Activated CD4-positive, alpha-beta T cell treated with anti-CD3 and anti-CD28 coated beads for 36 hours (primary cell): ENCODE measurements at regions of chr1 and their contacts with region 1.

Region 1: DNA sequence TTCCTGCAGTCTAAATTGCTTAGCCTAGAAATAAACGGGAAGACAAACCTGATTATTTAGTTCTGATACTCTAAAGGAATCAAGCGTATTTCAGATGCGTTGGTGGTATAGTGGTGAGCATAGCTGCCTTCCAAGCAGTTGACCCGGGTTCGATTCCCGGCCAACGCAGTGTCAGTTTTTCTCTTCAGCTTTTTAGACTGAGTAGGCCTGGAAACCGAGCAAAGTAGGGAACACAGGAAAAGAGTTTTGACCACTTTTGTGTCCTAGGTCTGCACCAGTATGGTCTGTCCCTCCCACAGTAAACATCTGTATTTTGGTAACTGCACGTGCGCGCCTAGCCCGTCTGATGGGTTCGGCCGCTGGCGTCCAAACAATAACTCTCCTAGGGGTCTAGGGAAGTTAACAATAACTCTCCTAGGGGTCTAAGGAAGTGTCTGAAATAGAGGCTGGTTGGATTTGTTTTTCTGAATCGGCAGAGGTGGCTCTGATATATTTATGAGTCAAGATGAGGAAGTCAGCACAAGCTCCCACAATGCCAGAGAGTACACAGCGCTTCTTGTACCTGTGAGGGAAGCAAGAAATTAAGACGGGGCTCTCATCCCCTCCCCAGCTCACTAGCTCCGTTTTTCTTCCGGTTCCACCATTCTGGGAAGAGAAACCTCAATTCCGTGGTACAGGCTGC is 15.6 kb upstream of the HJV start:
- DNase-seq: peak; percentile 91
- ATAC-seq: peak; percentile 45
- H3K4me3 Mint-ChIP-seq: peak overlapping the region; percentile 95
- H3K27ac Mint-ChIP-seq: peak overlapping the region; percentile 98
- H3K4me1 Mint-ChIP-seq: peaks cover 36% of the 10 kb centered on the region
- H3K27me3 Mint-ChIP-seq: peaks cover 2% of the 10 kb centered on the region

Region 2: GRCh38 chr1:145927063-145927886 is 109.8 kb before region 1 on chr1 and contains the start of gene RBM8A:
- CTCF ChIA-PET with region 1: no interaction called
- POLR2A ChIA-PET with region 1: interaction called, 3 read pairs
- intact Hi-C with region 1: loop called (anchors 1 to 5 kb)
- DNase-seq: peak; percentile 96
- ATAC-seq: peak; percentile 97
- H3K4me3 Mint-ChIP-seq: no peak within 1 kb of the TSS
- H3K27ac Mint-ChIP-seq: no peak within 1 kb of the TSS
- H3K4me1 Mint-ChIP-seq: peaks cover 28% of the 10 kb centered on the region
- H3K27me3 Mint-ChIP-seq: no peaks in the 10 kb centered on the region
- total RNA-seq, gene RBM8A: 293 to 330 TPM

Region 3: DNA sequence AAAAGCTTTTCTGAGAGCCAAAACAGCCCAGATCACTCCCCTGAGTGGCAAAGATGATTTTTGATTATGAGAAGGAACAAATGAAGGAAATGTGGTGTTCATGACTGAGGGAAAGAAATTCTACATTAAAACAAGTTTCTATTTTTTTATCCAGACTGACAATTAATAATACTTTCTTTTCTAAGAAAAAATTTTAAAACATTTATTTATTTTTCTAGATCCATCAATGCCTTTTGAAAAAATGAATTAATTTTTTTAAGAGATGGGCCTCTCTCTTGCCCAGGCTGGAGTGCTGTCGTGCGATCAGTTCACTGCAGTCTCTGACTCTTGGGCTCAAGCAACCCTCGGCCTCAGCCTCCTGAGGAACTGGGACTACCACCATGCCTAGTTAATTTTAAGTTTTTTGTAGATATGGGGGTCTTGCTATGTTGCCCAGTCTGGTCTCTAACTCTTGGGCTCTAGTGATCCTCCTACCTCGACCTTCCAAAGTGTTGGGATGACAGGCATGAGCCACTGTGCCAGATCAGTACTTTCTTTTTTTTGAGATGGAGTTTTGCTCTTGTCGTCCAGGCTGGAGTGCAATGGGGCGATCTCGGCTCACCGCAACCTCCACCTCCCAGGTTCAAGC is 29.5 kb before region 1 on chr1:
- CTCF ChIA-PET with region 1: interaction called, 7 read pairs
- POLR2A ChIA-PET with region 1: interaction called, 3 read pairs
- intact Hi-C with region 1: loop called (anchors 2 kb)
- DNase-seq: no peak
- ATAC-seq: no peak
- H3K4me3 Mint-ChIP-seq: peak overlapping the region; percentile 58
- H3K27ac Mint-ChIP-seq: peak overlapping the region; percentile 76
- H3K4me1 Mint-ChIP-seq: peaks cover 38% of the 10 kb centered on the region
- H3K27me3 Mint-ChIP-seq: no peaks in the 10 kb centered on the region

Region 4: GRCh38 chr1:146012737-146013403 is 24.2 kb before region 1 on chr1:
- CTCF ChIA-PET with region 1: interaction called, 14 read pairs
- POLR2A ChIA-PET with region 1: interaction called, 9 read pairs
- intact Hi-C with region 1: loop called (anchors 1 to 2 kb)
- DNase-seq: peak; percentile 71
- ATAC-seq: peak; percentile 81
- H3K4me3 Mint-ChIP-seq: no peak overlapping the region
- H3K27ac Mint-ChIP-seq: peak overlapping the region; percentile 21
- H3K4me1 Mint-ChIP-seq: peaks cover 7% of the 10 kb centered on the region
- H3K27me3 Mint-ChIP-seq: peaks cover 5% of the 10 kb centered on the region

Region 5: DNA sequence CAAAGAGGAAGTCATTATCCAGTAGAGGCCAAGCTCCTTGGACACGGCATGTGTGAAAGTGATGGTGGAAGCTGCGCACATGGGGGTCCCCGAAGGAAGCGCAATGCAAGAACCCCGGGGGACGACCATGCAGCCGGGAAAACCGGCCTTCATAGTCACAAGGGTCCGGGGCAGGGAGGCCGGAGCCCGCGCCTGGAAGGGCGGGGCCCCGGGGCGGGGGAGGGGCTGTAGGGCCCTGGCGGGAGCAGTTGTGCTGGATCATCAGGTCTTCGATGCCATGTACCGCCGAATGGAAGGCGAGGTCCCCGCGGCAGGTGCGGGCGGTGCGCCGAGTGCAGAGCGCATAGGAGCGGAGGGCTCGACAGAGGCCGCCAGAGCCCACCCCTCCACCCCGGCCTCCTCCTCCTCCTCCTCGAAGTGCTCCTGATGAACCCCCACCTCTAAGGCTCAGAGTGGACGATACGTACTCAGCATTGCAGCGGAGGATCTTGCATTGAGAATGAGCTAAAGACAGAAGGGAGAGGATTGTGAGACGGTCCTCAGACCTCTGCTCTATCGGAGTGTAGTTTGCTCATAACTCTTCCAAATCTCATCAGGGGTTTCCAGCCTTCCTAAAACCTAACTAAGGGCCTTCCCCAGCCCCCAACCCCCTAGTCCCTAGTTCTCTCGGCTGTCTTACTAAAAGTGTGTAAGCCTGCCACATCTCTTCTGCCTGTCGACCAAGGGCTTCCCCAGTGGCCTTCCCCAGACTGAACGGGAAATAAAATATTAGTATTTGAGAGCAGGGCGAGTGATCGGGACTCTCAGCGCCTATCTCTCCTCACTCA is 17.7 kb before region 1 on chr1:
- CTCF ChIA-PET with region 1: interaction called, 14 read pairs
- POLR2A ChIA-PET with region 1: interaction called, 9 read pairs
- intact Hi-C with region 1: loop called in 1 of 2 experiments (anchors 1 kb)
- DNase-seq: peak; percentile 30
- ATAC-seq: peak; percentile 19
- H3K4me3 Mint-ChIP-seq: no peak overlapping the region
- H3K27ac Mint-ChIP-seq: no peak overlapping the region
- H3K4me1 Mint-ChIP-seq: peaks cover 8% of the 10 kb centered on the region
- H3K27me3 Mint-ChIP-seq: peaks cover 36% of the 10 kb centered on the region

Region 6: GRCh38 chr1:146049436-146049835 is 12.3 kb after region 1 on chr1:
- CTCF ChIA-PET with region 1: interaction called, 20 read pairs
- POLR2A ChIA-PET with region 1: interaction called, 228 read pairs
- intact Hi-C with region 1: loop called in 1 of 2 experiments (anchors 1 kb)
- DNase-seq: no peak
- ATAC-seq: no peak
- H3K4me3 Mint-ChIP-seq: no peak overlapping the region
- H3K27ac Mint-ChIP-seq: no peak overlapping the region
- H3K4me1 Mint-ChIP-seq: peaks cover 26% of the 10 kb centered on the region
- H3K27me3 Mint-ChIP-seq: no peaks in the 10 kb centered on the region